Aorta (tissue), 5 donors: ENCODE measurements at regions of chr12 and their contacts with region 1.

Region 1: DNA sequence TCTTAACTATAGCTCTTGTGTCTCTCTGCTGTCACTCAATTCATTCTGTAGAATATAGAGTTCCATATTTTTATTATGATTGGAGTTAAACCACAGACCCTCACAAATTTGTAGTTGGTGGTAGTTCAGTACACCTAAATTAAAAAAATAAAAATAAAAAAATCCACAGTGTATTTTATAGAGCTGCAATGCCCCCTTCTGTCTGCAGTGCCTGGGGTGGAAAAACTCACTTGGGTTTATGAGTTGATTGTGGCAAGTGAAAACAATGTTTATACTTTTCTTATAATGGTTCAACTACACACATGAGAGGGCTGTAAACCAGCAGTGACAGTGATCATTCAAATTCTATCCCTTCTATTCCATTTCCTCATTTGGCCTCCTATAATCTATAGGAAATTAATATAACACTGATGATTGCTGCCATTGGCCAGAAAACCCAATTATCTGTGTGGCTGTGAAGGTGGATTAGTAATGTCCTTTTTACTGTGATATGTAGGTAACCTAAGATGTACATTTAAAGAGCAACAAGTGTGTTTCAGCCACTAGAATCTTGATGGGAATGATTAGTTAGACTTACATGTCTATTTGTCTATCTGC is 166.9 kb upstream of the LRIG3 start:
- DNase-seq: no peak
- ATAC-seq: no peak
- H3K4me3 ChIP-seq: no peak overlapping the region
- H3K27ac ChIP-seq: no peak overlapping the region
- H3K4me1 ChIP-seq: no peaks in the 10 kb centered on the region
- H3K27me3 ChIP-seq: no peaks in the 10 kb centered on the region

Region 2: GRCh38 chr12:58443273-58443980 is 643.7 kb before region 1 on chr12:
- intact Hi-C with region 1: loop called in 1 of 2 experiments (anchors 10 kb)
- DNase-seq: no peak
- ATAC-seq: no peak
- H3K4me3 ChIP-seq: no peak overlapping the region
- H3K27ac ChIP-seq: no peak overlapping the region
- H3K4me1 ChIP-seq: peaks cover 0 to 3% of the 10 kb centered on the region in 2 donors
- H3K27me3 ChIP-seq: no peaks in the 10 kb centered on the region

Region 3: GRCh38 chr12:58529897-58530741 is 557.1 kb before region 1 on chr12:
- intact Hi-C with region 1: loop called (anchors 5 to 10 kb)
- DNase-seq: no peak
- ATAC-seq: peak; percentile 54
- H3K4me3 ChIP-seq: no peak overlapping the region
- H3K27ac ChIP-seq: no peak overlapping the region
- H3K4me1 ChIP-seq: peaks cover 0 to 2% of the 10 kb centered on the region in 2 donors
- H3K27me3 ChIP-seq: no peaks in the 10 kb centered on the region